IMR-90 (cell line): ENCODE measurements at regions of chr2 and their contacts with region 1.

Region 1: GRCh38 chr2:50225021-50225928 is 806.7 kb downstream of the NRXN1 start:
- DNase-seq: no peak
- ATAC-seq: no peak
- H3K4me3 ChIP-seq: no peak overlapping the region
- H3K27ac ChIP-seq: no peak overlapping the region
- H3K4me1 ChIP-seq: no peaks in the 10 kb centered on the region
- H3K27me3 ChIP-seq: no peaks in the 10 kb centered on the region
- CTCF ChIP-seq: no peak
- POLR2A ChIP-seq: no peak
- RAD21 ChIP-seq: no peak

Region 2: DNA sequence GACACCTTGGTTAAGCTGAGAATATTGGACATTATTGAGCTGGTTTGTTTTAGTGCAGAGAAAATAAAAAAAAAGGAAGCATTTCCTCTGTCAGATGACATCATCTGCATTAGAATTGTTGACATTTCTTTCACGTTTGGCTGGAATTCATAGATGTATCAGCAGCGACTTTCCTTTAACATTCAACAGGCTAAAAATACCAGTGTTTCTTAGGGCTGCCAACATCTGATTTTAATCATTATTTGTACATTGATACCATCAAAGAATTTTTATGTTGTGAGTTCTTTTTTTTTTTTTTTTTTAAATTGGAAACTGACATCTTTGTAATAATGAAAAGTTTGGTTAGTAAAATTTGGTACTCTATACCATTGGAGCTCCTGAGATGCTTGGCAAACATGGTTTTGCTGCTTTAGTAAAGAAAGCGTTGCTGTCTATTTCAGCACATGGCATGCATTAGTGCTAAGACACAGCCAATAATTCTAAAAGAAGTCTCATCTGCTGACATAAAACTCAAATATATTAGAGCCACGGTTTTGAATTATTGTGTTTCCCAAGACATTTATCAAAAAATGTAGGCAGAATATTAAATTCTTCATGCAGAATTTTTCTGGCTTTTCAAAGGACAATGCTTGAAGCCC is 1574.0 kb before region 1 on chr2:
- CTCF ChIA-PET with region 1: no interaction called
- POLR2A ChIA-PET with region 1: no interaction called
- dilution Hi-C with region 1: no loop called
- in situ Hi-C with region 1: no loop called
- intact Hi-C with region 1: loop called (anchors 10 kb)
- DNase-seq: peak; percentile 76
- ATAC-seq: peak; percentile 70
- H3K4me3 ChIP-seq: no peak overlapping the region
- H3K27ac ChIP-seq: no peak overlapping the region
- H3K4me1 ChIP-seq: no peaks in the 10 kb centered on the region; the same call in 1 of the 2 replicates
- H3K27me3 ChIP-seq: no peaks in the 10 kb centered on the region
- CTCF ChIP-seq: no peak
- POLR2A ChIP-seq: no peak
- RAD21 ChIP-seq: no peak